Right ventricle myocardium inferior (tissue), 1 donor: ENCODE measurements at regions of chr3 and their contacts with region 1.

Region 1: DNA sequence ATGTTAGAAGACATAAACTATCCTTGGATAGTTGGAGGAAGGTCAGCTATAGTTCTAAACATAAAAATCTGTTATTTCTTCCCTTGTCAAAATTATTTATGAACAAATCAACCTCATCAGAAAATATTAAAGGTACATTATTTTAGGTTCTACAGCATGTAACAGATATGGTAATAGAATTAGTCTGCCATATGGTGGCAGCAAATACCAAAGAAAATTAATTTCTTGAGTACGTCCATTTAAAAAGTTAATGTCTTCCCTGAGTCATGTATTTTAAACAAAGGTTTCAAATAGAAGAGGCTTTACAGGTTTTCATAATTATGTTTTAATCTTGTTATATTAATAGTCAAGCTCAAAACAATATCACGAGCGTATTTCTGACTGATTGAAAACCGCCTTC is 17.9 kb upstream of the ANKRD28 start:
- DNase-seq: no peak
- ATAC-seq: no peak

Region 2: DNA sequence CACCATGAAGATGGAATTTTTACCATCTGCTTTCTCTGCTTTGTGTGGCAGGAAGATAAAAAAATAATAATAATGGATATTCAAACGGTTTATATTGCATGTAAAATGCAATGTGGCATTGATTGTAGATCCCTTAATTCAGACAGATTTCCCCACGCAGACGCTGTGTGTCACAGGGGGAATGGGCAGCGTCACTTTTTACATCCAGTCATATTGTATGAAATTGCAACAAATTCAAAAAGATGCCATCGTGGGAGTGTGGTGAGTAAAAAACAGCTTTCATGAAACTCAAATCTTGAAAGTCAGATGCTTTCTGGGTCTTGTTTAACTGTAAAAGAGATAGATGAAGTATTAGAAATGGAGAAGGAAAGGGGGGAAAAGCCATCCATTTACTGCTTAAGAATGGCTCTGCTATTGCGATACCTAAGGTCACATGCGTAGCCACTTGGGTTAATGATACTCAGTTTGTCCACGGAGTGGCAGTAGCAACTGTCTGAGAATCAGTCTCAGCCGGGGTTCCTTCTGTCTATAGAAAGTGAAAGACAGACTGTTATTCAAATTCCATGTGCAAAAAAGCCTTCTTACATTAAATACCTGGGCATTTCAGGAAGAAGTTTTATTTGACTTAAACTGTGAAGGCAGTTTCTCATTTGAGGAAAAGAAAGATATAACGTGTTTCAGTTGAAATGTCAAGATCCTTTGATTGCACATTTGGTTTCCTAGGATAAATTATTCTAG is 185.7 kb before region 1 on chr3:
- intact Hi-C with region 1: loop called (anchors 2 kb)
- DNase-seq: no peak
- ATAC-seq: peak; percentile 95

Region 3: DNA sequence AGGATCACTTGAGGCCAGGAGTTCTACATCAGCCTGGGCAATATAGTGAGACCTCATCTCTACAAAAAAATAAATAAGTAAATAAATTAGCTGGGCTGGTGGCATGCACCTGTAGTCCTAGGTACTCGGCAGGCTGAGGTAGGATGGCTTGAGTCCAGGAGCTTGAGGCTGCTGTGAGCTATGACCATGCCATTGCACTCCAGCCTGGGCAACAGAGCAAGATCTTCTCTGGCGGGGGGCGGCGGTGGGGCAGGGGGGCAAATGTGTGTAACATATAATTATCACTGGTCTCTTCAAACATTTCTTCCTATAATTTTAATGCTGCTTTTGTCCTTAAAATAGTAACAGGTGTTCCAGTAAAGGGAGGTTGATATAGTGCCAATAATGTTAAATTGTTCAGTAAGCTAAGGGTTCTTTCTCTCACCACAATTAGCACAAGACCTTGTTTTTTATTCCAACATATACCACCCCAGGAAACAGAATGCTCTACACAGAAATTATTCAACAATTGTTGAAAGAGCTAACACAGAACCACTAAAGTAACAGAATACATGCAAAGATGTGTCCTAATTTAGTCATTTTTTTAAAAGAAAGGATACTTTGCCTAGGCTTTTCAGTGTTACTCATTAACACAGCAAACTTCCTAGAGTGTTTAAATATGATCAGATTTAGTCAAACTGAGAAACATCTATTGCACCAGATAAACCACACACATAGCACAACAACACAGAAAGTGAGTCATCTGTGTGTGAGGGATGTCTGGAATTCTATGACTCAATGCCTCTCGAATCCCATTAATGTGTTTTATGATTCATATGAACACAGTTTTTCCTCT is 47.1 kb before region 1 on chr3:
- intact Hi-C with region 1: no loop called
- DNase-seq: no peak
- ATAC-seq: no peak

Region 4: GRCh38 chr3:15783361-15783969 is 32.2 kb before region 1 on chr3:
- intact Hi-C with region 1: no loop called
- DNase-seq: no peak
- ATAC-seq: no peak

Region 5: DNA sequence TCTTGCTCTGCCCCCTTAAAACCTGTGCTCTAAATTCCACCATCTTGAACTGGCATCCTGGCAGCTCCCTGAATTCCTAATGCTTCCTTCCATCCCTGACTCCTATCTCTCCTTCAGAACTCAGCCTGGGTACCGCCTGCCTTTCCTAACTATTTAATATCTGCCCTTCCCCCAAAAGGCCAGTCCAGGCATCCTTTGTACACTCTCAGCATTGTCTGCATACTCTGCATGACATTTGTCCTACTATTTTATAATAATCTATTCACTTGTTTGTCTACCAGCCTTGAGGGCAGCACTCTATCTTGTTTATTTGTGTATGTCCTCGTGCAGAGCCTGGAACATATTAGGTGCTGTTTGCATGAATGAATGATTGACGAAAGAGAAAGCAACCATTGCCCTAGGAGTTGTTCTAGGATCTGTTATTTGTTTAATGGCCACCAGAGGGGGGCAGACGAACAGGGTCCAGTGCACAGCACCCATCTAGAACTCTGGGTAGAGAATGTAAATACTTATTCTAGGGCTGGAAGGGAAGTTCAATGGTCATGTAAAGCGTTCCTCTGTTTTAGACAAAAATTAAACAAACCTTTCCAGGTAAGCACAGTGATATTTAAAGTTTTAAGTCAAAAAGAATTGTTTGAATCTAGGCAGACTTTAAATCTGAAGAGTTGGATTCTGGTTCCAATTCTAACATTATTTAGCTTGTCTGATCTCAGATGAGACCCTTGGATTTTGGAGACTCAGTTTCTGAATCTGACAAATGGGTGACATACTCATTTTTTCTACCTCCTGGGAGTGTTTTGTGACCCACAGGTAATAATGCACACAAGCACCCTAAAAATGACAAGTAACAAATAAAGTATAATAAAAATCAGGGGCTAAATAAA is 233.0 kb after region 1 on chr3:
- intact Hi-C with region 1: loop called (anchors 5 kb)
- DNase-seq: no peak
- ATAC-seq: peak; percentile 92

Region 6: DNA sequence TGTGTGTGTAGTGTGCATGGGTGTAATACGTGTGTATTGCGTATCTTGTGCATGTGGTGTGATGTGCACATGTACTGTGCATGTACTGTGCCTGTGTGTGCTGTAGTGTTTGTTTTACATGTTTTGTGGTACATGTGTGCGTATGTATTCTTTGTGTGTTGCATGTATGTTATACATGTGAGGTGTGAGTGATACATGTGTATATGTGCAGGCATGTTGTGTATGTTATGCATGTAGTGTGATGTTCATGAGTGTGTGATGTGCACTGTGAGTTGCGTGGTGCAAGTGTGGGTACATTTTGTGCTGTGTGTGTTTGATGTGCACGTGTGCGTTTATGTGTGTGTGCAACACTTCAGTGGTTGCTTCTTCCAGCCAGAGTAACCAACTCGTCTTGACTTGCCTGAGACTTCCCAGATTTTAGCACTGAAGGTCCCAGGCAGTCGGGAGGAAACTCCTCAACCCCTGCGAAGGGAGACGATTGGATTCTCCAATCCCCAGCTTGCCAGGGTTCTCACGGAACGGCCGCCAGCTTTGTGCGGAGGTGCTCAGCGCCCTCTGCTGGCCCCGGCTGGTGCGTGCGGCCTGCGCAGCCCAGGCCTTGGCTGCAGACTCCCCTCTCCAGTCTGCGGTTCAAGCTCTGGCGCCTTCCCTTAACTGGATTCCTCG is 362.4 kb after region 1 on chr3:
- intact Hi-C with region 1: loop called (anchors 1 kb)
- DNase-seq: peak; percentile 89
- ATAC-seq: peak; percentile 72

Region 7: DNA sequence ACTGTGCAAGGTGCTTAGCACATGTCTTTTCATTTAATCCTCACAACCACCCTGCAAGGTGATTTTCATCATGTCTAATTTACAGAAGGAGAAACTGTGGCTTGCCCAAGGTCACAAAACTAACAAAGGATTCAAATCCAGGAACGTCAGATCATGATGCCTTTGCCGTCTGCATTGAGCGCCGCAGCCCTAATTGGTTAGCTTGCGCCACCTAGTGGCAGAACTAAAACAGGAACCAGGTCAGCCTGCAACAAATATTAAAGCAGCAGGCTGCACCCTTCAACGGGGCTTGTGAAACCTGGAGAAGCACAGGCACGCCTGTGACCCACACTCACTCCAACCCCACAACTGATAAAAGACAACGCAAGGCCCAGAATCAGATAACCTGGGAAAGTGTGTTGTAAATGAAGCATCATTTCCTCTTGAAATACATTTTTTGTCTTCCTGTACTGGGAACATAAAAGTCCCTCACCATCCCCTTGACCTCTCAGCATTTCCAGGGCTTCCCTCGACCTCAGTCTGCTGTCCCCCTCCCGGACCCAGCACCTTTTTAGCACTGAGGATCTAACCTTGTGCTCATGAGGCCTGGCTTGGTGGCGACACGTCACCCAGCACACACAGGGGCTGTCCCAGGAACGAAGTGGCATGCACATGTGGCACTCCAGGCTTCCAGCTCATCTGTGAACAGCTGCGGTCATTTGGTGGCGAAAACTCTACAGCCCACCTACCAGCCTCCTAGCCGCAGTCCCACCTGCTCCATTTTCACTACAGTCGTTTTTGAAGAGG is 431.8 kb after region 1 on chr3:
- intact Hi-C with region 1: loop called (anchors 2 kb)
- DNase-seq: peak; percentile 83
- ATAC-seq: peak; percentile 60

Region 8: GRCh38 chr3:16550676-16551341 is 735.1 kb after region 1 on chr3:
- intact Hi-C with region 1: loop called (anchors 10 kb)
- DNase-seq: no peak
- ATAC-seq: peak; percentile 82